CD8-positive, alpha-beta T cell (primary cell): ENCODE measurements at regions of chr17 and their contacts with region 1.

Region 1: DNA sequence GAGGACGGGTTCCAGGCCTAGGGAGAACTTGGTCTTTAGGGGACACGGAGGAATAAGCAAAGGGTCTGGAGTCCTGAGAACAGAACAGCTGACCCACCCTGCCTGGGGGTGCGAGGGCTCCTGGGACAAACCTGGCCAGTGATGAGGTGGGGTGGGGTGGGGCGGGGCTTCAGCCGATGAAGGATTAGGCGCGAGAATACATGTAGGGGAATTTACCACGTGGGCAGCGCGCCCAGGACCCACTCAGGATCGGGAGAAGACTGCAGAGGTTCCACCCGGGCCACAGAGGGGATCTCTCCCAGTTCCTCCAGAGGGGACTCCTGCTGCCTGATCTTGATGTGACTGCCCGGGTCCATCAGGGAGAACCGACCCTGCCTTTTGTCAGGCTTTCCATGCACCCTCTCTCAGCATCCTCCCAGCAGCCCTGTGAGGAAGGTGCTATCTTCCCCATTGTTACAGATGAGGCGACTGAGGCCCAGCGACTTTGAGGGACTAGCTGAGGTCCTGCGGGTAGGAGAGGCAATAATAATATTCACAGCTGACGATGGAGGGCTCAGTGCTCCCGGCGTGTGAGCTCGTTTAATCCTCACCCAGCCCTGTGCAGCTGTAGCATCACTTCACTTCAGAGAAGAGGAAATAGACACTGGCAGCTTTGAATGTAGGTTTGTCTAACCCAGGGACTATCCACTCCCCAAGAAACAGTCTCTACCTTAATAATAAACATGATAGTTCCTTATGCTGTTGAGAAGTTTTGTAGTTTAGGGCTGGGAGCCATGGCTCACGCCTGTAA is 21.4 kb downstream of the LASP1 start:
- DNase-seq: peak in 3 of 9 experiments; percentile 44 to 70 (median 45)
- ATAC-seq: peak; percentile 65
- H3K4me3 ChIP-seq: peak overlapping the region in 1 of 2 experiments; percentile 29
- H3K4me3 Mint-ChIP-seq: peak overlapping the region; percentile 58
- H3K27ac ChIP-seq: peak overlapping the region; percentile 18 to 59
- H3K27ac Mint-ChIP-seq: peak overlapping the region; percentile 91
- H3K4me1 ChIP-seq: peaks cover 89% of the 10 kb centered on the region
- H3K4me1 Mint-ChIP-seq: peaks cover 85% of the 10 kb centered on the region
- H3K27me3 ChIP-seq: no peaks in the 10 kb centered on the region
- H3K27me3 Mint-ChIP-seq: no peaks in the 10 kb centered on the region
- CTCF ChIP-seq: no peak

Region 2: DNA sequence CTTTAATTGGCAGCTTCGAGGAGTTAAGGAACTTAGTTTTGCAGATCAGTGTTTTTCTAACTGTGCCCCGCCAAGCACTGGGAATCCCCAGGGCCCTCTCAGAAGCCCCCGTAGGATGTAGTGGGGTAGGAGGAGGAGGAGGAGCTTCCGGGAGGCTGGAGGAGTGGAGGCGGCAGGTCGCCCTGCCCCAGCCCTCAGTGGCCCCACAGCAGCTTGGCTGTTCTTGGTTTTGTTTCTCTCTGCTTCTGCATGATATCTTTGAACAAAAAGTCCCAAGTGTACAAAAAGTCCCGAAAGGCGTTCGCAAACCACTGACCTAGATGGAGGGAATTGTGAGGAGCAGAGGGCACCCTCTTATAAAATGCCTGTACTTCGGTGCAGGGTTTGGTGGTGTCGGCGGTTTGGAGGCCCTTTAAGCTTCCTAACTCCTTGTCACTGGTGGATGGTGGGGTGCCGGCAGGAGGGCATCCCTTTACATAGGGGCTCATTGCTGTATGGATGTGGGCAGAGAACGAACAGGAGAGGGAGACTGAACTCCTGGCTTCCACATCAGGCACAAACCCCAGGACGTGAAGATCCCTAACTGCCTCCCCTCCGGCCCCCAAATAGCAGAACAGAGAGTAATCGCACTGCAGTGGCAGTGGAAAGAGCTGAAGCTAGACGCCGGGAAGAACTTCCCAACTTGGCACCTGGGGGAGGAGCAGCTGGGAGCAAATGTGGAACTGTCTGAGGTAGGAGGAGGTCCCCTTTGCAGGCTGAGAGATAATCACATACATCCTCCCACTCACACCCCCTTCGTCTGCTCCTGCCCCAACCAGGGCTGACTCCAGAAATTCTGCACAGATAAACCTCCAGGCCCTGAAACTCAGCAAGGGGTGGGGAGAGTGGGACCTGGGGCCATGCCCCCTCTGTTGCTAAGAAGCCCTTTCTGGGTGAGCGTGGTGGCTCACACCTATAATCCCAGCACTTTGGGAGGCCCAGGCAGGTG is 236.5 kb before region 1 on chr17:
- CTCF ChIA-PET with region 1: no interaction called
- POLR2A ChIA-PET with region 1: no interaction called
- intact Hi-C with region 1: no loop called
- DNase-seq: peak in 1 of 9 experiments; percentile 54
- ATAC-seq: peak; percentile 42
- H3K4me3 ChIP-seq: no peak overlapping the region
- H3K4me3 Mint-ChIP-seq: no peak overlapping the region
- H3K27ac ChIP-seq: no peak overlapping the region
- H3K27ac Mint-ChIP-seq: no peak overlapping the region
- H3K4me1 ChIP-seq: peaks cover 21% of the 10 kb centered on the region
- H3K4me1 Mint-ChIP-seq: peaks cover 22% of the 10 kb centered on the region
- H3K27me3 ChIP-seq: no peaks in the 10 kb centered on the region
- H3K27me3 Mint-ChIP-seq: peaks cover 21% of the 10 kb centered on the region
- CTCF ChIP-seq: no peak

Region 3: DNA sequence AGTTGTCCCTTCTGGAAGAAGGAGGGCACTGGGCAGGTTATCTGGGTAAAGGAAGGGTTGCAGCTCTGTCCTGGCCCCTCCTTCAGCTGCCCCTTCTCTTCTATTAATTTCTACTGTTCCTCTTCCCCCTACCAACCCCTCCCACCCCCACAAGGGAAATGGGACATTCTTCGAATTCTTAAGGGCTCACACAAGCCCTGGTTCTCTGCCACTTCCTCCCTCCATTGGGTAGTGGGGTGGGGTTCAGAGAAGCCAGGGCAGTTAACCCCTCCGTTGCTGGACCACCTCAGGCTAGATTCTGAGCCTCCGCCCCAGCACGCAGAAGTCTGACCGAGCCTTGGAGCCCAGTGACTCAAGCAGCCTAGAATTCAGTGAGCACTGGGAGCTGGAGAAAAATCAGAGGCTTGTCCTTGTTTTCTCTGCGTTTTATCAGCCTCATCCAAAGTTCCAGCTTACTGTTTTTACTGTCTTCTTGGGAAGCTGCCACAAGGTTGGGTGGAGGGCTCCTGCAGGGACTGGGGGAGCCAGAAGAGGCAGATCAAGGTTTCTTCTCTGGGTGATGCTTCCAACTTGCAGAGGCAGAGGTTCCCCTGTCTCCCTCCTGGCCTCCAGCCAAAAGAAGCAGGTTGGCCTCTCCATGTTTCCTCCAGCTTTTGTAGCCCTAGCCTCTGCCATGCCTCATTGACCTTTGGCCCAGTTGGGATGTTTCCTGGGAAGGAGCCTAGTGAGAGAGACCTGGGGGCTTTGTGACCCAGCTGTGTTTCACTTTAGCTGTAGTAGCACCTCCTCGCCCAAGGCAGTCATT is 11.2 kb before region 1 on chr17:
- CTCF ChIA-PET with region 1: interaction called, 6 read pairs
- POLR2A ChIA-PET with region 1: interaction called, 10 read pairs
- intact Hi-C with region 1: no loop called
- DNase-seq: peak in 2 of 9 experiments; percentile 29 to 59
- ATAC-seq: peak; percentile 48
- H3K4me3 ChIP-seq: peak overlapping the region; percentile 1 to 46
- H3K4me3 Mint-ChIP-seq: peak overlapping the region; percentile 66
- H3K27ac ChIP-seq: peak overlapping the region; percentile 34 to 57
- H3K27ac Mint-ChIP-seq: peak overlapping the region; percentile 88
- H3K4me1 ChIP-seq: peaks cover 89% of the 10 kb centered on the region
- H3K4me1 Mint-ChIP-seq: peaks cover 89% of the 10 kb centered on the region
- H3K27me3 ChIP-seq: no peaks in the 10 kb centered on the region
- H3K27me3 Mint-ChIP-seq: no peaks in the 10 kb centered on the region
- CTCF ChIP-seq: no peak